CD14-positive monocyte (primary cell): ENCODE measurements at regions of chr17 and their contacts with region 1.

Region 1: DNA sequence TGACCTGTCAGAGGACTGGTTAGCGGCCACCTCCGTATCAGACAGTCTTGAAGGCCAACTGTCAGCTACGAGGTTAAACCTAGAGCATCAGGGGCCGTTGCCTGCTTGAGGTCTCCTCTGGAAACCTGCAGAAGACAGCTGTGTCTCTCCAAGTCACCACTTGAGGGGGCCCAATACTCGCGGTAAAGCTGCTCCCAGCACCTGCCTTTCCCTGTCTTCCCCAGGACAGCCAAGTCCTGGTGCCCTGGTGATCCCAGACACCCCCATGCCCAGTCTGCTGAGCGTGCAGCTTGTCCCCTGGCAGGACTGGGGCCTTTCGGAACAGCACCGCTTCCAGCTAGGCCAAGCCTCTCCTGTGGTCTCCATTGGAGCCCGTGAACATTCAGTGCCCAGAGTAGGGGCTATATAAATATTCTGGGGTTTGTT is 80.1 kb downstream of the DNAH17 start:
- DNase-seq: peak; percentile 57 to 74 (median 73)
- H3K4me3 ChIP-seq: no peak overlapping the region
- H3K4me3 Mint-ChIP-seq: no peak overlapping the region
- H3K27ac ChIP-seq: no peak overlapping the region
- H3K27ac Mint-ChIP-seq: peak overlapping the region in 2 of 7 donors; percentile 52 to 83
- H3K4me1 ChIP-seq: no peaks in the 10 kb centered on the region
- H3K4me1 Mint-ChIP-seq: peaks cover 16% of the 10 kb centered on the region
- H3K27me3 ChIP-seq: no peaks in the 10 kb centered on the region
- H3K27me3 Mint-ChIP-seq: peaks cover 0 to 4% (median 3%) of the 10 kb centered on the region in 3 donors
- CTCF ChIP-seq: peak; percentile 76

Region 2: DNA sequence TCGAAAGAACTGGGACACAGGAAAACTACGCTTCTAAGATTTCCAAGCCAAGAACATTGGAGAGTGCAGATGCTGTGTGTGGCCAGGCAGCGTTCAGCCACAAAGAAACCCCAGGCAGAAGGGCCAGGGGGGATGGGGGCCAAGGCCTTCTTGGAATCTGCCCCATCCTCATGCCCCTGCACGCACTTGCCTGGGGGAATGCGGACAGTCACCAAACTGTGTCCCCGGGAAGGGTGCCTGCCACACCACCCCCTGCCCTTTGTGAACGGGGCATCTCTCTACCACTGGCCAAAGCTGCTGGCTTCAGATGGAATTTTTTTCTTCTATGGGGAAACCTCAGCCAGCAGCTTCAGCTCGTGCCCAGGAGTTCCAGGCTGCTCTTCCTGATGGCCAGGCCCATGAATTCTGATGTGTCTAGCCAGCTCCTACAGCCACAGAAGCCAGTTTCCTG is 112.1 kb after region 1 on chr17:
- intact Hi-C with region 1: loop called (anchors 5 kb)
- DNase-seq: no peak
- H3K4me3 ChIP-seq: no peak overlapping the region
- H3K4me3 Mint-ChIP-seq: no peak overlapping the region
- H3K27ac ChIP-seq: no peak overlapping the region
- H3K27ac Mint-ChIP-seq: no peak overlapping the region
- H3K4me1 ChIP-seq: peaks cover 13 to 18% of the 10 kb centered on the region in 2 donors
- H3K4me1 Mint-ChIP-seq: peaks cover 16% of the 10 kb centered on the region
- H3K27me3 ChIP-seq: no peaks in the 10 kb centered on the region
- H3K27me3 Mint-ChIP-seq: peaks cover 11 to 22% (median 20%) of the 10 kb centered on the region in 3 donors
- CTCF ChIP-seq: no peak

Region 3: GRCh38 chr17:78708510-78708973 is 211.4 kb after region 1 on chr17:
- intact Hi-C with region 1: loop called (anchors 1 to 5 kb)
- DNase-seq: peak; percentile 48 to 60 (median 60)
- H3K4me3 ChIP-seq: no peak overlapping the region
- H3K4me3 Mint-ChIP-seq: no peak overlapping the region
- H3K27ac ChIP-seq: peak overlapping the region in 1 of 2 donors; percentile 18
- H3K27ac Mint-ChIP-seq: peak overlapping the region in 6 of 7 donors; percentile 47 to 78 (median 71)
- H3K4me1 ChIP-seq: peaks cover 8 to 10% of the 10 kb centered on the region in 2 donors
- H3K4me1 Mint-ChIP-seq: peaks cover 25% of the 10 kb centered on the region
- H3K27me3 ChIP-seq: no peaks in the 10 kb centered on the region
- H3K27me3 Mint-ChIP-seq: no peaks in the 10 kb centered on the region
- CTCF ChIP-seq: peak; percentile 94